ENCODE measurements at regions of chr14 and their contacts with region 1.

Region 1: GRCh38 chr14:54722781-54723432 is 156.0 kb downstream of the SAMD4A start:
- DNase-seq: peak; percentile 58
- H3K4me3 ChIP-seq: no peak overlapping the region
- H3K27ac ChIP-seq: no peak overlapping the region
- H3K4me1 ChIP-seq: no peaks in the 10 kb centered on the region
- H3K27me3 ChIP-seq: no peaks in the 10 kb centered on the region
- CTCF ChIP-seq: peak; percentile 52 to 73

Region 2: GRCh38 chr14:54532111-54533012 is 190.5 kb before region 1 on chr14:
- CTCF ChIA-PET with region 1: interaction called, 10 read pairs
- dilution Hi-C with region 1: no loop called
- in situ Hi-C with region 1: no loop called
- intact Hi-C with region 1: no loop called
- DNase-seq: no peak
- H3K4me3 ChIP-seq: no peak overlapping the region
- H3K27ac ChIP-seq: no peak overlapping the region
- H3K4me1 ChIP-seq: no peaks in the 10 kb centered on the region
- H3K27me3 ChIP-seq: no peaks in the 10 kb centered on the region
- CTCF ChIP-seq: no peak

Measured in mammary epithelial cell (primary cell).